ENCODE measurements at regions of chr17 and their contacts with region 1.

Region 1: GRCh38 chr17:59440784-59441441 is 109.5 kb downstream of the YPEL2 start:
- DNase-seq: peak; percentile 86 to 96
- H3K4me3 ChIP-seq: no peak overlapping the region
- H3K27ac ChIP-seq: peak overlapping the region; percentile 67 to 79
- H3K4me1 ChIP-seq: peaks cover 0 to 4% of the 10 kb centered on the region in 2 donors
- H3K27me3 ChIP-seq: no peaks in the 10 kb centered on the region
- CTCF ChIP-seq: peak; percentile 82 to 97 (median 92)
- POLR2A ChIP-seq: no peak

Region 2: GRCh38 chr17:59315866-59316265 is 125.0 kb before region 1 on chr17:
- intact Hi-C with region 1: loop called (anchors 5 kb)
- DNase-seq: no peak
- H3K4me3 ChIP-seq: no peak overlapping the region
- H3K27ac ChIP-seq: no peak overlapping the region
- H3K4me1 ChIP-seq: no peaks in the 10 kb centered on the region
- H3K27me3 ChIP-seq: no peaks in the 10 kb centered on the region
- CTCF ChIP-seq: no peak
- POLR2A ChIP-seq: no peak

Region 3: GRCh38 chr17:59373555-59374495 is 67.1 kb before region 1 on chr17:
- intact Hi-C with region 1: no loop called
- DNase-seq: peak; percentile 30 to 60
- H3K4me3 ChIP-seq: no peak overlapping the region
- H3K27ac ChIP-seq: peak overlapping the region; percentile 91 to 96
- H3K4me1 ChIP-seq: peaks cover 30 to 42% of the 10 kb centered on the region in 2 donors
- H3K27me3 ChIP-seq: no peaks in the 10 kb centered on the region
- CTCF ChIP-seq: no peak
- POLR2A ChIP-seq: no peak

Region 4: GRCh38 chr17:59534598-59534997 is 93.7 kb after region 1 on chr17:
- intact Hi-C with region 1: no loop called
- DNase-seq: no peak
- H3K4me3 ChIP-seq: no peak overlapping the region
- H3K27ac ChIP-seq: no peak overlapping the region
- H3K4me1 ChIP-seq: no peaks in the 10 kb centered on the region
- H3K27me3 ChIP-seq: no peaks in the 10 kb centered on the region
- CTCF ChIP-seq: no peak
- POLR2A ChIP-seq: no peak

Measured in uterus (tissue), 4 donors.